Caco-2 (cell line): ENCODE measurements at regions of chr1 and their contacts with region 1.

Region 1: GRCh38 chr1:236868625-236869467 is 73.8 kb downstream of the MTR start:
- DNase-seq: peak in 1 of 2 experiments; percentile 58
- H3K4me3 ChIP-seq: no peak overlapping the region
- H3K4me3 Mint-ChIP-seq: no peak overlapping the region
- H3K27ac Mint-ChIP-seq: no peak overlapping the region
- H3K4me1 ChIP-seq: no peaks in the 10 kb centered on the region
- H3K4me1 Mint-ChIP-seq: no peaks in the 10 kb centered on the region
- H3K27me3 ChIP-seq: no peaks in the 10 kb centered on the region
- H3K27me3 Mint-ChIP-seq: no peaks in the 10 kb centered on the region
- CTCF ChIP-seq: peak; percentile 84 to 95

Region 2: DNA sequence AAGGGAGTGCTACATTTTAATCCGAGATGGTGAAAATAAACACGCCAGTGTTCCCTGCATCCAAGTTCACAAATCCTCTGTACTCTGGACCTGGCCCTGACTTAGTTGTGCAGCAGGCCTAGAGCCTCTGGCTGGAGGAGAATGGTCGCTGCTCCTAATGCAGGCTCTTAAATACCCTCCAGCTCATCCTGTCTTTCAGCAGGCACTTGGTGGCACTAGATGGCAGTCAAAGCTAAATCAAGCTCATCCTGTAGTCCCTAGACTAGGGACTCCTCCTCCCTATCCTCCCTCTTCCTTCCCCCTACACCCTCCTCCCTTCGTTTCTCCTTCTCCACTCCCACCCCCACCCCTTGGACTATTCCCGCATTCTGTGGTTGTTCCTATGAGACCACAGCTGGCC is 115.3 kb before region 1 on chr1:
- CTCF ChIA-PET with region 1: interaction called, 7 read pairs
- POLR2A ChIA-PET with region 1: no interaction called
- intact Hi-C with region 1: loop called (anchors 1 kb)
- DNase-seq: peak; percentile 50 to 53
- H3K4me3 ChIP-seq: no peak overlapping the region
- H3K4me3 Mint-ChIP-seq: no peak overlapping the region
- H3K27ac Mint-ChIP-seq: no peak overlapping the region
- H3K4me1 ChIP-seq: no peaks in the 10 kb centered on the region
- H3K4me1 Mint-ChIP-seq: no peaks in the 10 kb centered on the region
- H3K27me3 ChIP-seq: no peaks in the 10 kb centered on the region
- H3K27me3 Mint-ChIP-seq: peaks cover 5% of the 10 kb centered on the region
- CTCF ChIP-seq: peak; percentile 24 to 32

Region 3: GRCh38 chr1:236759252-236759859 is 109.5 kb before region 1 on chr1:
- CTCF ChIA-PET with region 1: no interaction called
- POLR2A ChIA-PET with region 1: no interaction called
- intact Hi-C with region 1: loop called (anchors 1 kb)
- DNase-seq: peak in 1 of 2 experiments; percentile 39
- H3K4me3 ChIP-seq: no peak overlapping the region
- H3K4me3 Mint-ChIP-seq: no peak overlapping the region
- H3K27ac Mint-ChIP-seq: no peak overlapping the region
- H3K4me1 ChIP-seq: 0 out of 2 replicates have a peak, but pooled peaks cover 4% of the 10 kb centered on the region
- H3K4me1 Mint-ChIP-seq: no peaks in the 10 kb centered on the region
- H3K27me3 ChIP-seq: no peaks in the 10 kb centered on the region
- H3K27me3 Mint-ChIP-seq: peaks cover 3% of the 10 kb centered on the region
- CTCF ChIP-seq: peak; percentile 53 to 54

Region 4: GRCh38 chr1:236795035-236795756 is 73.7 kb before region 1 on chr1 and contains the start of gene MTR:
- CTCF ChIA-PET with region 1: interaction called, 3 read pairs
- POLR2A ChIA-PET with region 1: no interaction called
- intact Hi-C with region 1: loop called (anchors 2 kb)
- DNase-seq: peak; percentile 97 to 98
- H3K4me3 ChIP-seq: peak within 1 kb of the TSS; percentile 95
- H3K4me3 Mint-ChIP-seq: peak within 1 kb of the TSS; percentile 97
- H3K27ac Mint-ChIP-seq: peak within 1 kb of the TSS; percentile 97
- H3K4me1 ChIP-seq: no peaks in the 10 kb centered on the region
- H3K4me1 Mint-ChIP-seq: peaks cover 5% of the 10 kb centered on the region
- H3K27me3 ChIP-seq: no peaks in the 10 kb centered on the region
- H3K27me3 Mint-ChIP-seq: no peaks in the 10 kb centered on the region
- CTCF ChIP-seq: no peak
- total RNA-seq, gene MTR: 22.9 and 26.3 TPM in 2 replicates

Region 5: DNA sequence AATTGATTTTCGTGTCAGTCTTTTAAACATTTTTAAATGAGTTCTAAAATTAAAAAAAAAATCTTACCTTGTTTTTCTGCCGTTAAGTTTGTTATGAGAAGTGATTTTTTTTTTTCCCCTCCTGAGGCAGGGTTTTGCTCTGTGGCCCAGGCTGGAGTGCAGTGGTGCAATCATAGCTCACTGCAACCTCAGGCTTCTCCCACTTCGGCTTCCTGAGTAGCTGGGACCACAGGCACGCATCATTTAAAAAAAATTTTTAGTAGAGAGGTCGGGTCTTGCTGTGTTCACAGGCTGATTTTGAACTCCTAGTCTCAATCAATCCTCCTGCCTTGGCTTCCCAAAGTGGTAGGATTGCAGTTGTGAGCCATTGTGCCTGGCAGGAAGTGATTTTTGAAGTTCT is 32.7 kb before region 1 on chr1:
- CTCF ChIA-PET with region 1: no interaction called
- POLR2A ChIA-PET with region 1: no interaction called
- intact Hi-C with region 1: no loop called
- DNase-seq: no peak
- H3K4me3 ChIP-seq: no peak overlapping the region
- H3K4me3 Mint-ChIP-seq: no peak overlapping the region
- H3K27ac Mint-ChIP-seq: no peak overlapping the region
- H3K4me1 ChIP-seq: no peaks in the 10 kb centered on the region; the same call in none of the 2 replicates
- H3K4me1 Mint-ChIP-seq: no peaks in the 10 kb centered on the region
- H3K27me3 ChIP-seq: no peaks in the 10 kb centered on the region
- H3K27me3 Mint-ChIP-seq: no peaks in the 10 kb centered on the region
- CTCF ChIP-seq: no peak

Region 6: DNA sequence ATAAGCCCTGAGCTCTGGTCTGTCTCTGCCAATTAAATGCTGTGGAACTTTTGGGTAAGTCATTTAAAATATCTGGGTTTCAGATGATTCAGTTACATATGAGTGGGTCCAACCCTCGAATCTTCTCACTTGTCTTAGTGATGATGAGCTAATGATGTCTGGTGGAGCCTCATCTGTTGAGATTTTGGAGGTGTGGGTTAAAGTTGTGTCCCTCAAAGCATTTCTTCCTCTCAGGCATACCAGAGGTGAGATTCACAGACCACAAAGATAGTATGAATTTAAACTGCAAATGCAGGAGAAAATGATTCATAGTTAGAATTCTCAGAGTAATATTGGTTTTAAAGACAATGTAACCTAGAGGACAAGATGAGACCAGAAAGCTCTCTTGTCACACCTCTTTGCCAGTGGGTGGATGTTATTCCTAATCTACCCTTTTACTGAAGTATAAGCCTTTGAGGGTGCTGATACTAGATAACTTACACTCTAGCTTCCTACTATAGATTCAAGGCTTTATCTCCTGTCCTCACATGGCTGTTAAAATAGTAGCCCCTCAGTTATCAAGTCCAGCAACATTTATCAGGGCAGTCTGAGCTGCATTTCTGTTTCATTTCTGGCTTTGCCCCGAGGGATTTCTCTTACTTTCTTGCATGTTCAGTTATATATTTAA is 44.7 kb after region 1 on chr1:
- CTCF ChIA-PET with region 1: no interaction called
- POLR2A ChIA-PET with region 1: no interaction called
- intact Hi-C with region 1: no loop called
- DNase-seq: no peak
- H3K4me3 ChIP-seq: no peak overlapping the region
- H3K4me3 Mint-ChIP-seq: no peak overlapping the region
- H3K27ac Mint-ChIP-seq: no peak overlapping the region
- H3K4me1 ChIP-seq: no peaks in the 10 kb centered on the region
- H3K4me1 Mint-ChIP-seq: no peaks in the 10 kb centered on the region
- H3K27me3 ChIP-seq: no peaks in the 10 kb centered on the region
- H3K27me3 Mint-ChIP-seq: no peaks in the 10 kb centered on the region
- CTCF ChIP-seq: no peak